Cardiac septum (tissue), 1 donor: ENCODE measurements at regions of chr15 and their contacts with region 1.

Region 1: DNA sequence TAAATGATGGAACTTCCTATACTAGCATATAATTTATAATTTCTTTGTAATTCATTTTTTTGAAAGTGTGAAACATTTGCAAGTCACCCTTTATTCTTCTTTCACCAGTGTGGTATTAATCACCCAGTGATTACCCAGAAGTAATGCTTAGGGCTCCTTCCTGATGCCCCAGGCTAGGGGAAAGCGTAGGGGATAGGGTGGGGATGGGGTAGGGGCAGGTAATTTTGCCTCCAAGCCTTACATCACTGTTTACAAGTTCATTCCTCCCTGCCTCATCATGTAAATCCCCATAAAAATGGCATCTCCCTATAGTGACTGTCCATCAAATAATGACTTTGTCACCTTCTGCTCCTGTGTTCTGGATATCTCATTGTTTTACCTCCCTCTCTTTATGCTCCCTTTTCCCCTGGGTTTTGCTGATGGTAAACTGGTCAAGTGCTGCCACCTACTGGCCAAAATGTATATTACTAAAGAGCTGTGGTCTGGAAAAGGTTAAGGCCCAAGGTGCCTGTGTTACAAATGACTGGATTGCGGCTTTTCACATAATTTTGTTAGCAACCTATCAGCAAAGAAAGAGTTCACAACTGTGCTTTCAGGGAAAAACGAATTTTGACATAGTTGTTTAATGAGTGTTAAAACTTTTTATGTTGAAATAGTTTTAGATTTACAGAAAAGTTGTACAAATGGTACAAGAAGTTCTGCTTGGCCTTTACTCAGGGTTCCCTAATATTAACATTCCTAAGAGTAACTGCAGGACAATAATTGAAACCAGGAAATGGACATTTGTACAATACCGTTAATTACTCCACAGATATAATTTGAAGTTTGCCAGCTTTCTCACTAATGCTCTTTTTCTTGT is 54.7 kb downstream of the ONECUT1 start:
- DNase-seq: no peak

Region 2: DNA sequence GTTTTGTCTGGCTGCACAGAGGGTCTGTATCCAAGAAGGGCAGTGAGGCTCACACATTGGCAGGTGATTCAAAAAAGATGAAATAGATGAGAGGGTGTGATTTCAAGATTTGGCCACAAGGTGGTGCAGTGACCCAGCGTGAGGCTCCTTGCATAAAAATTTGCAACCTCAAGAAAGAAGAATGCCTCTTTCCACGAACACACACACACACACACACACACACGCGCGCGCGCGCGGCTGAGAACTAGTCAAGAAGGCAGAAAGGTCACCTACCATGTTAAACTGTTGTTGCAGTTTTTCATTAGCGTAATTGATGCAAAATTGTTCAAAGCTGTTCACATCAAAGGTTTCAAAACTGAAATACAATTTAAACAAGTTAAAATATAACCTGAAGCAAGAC is 479.1 kb before region 1 on chr15:
- intact Hi-C with region 1: loop called (anchors 1 kb)
- DNase-seq: no peak

Region 3: GRCh38 chr15:52331490-52332240 is 403.8 kb before region 1 on chr15:
- intact Hi-C with region 1: loop called (anchors 10 kb)
- DNase-seq: no peak

Region 4: GRCh38 chr15:52584414-52584813 is 151.0 kb before region 1 on chr15:
- intact Hi-C with region 1: loop called (anchors 10 kb)
- DNase-seq: no peak

Region 5: GRCh38 chr15:52759969-52760368 is 24.5 kb after region 1 on chr15:
- intact Hi-C with region 1: no loop called
- DNase-seq: no peak

Region 6: GRCh38 chr15:52924630-52925029 is 189.2 kb after region 1 on chr15:
- intact Hi-C with region 1: no loop called
- DNase-seq: no peak